K562 (cell line): ENCODE measurements at regions of chr19 and their contacts with region 1.

Region 1: DNA sequence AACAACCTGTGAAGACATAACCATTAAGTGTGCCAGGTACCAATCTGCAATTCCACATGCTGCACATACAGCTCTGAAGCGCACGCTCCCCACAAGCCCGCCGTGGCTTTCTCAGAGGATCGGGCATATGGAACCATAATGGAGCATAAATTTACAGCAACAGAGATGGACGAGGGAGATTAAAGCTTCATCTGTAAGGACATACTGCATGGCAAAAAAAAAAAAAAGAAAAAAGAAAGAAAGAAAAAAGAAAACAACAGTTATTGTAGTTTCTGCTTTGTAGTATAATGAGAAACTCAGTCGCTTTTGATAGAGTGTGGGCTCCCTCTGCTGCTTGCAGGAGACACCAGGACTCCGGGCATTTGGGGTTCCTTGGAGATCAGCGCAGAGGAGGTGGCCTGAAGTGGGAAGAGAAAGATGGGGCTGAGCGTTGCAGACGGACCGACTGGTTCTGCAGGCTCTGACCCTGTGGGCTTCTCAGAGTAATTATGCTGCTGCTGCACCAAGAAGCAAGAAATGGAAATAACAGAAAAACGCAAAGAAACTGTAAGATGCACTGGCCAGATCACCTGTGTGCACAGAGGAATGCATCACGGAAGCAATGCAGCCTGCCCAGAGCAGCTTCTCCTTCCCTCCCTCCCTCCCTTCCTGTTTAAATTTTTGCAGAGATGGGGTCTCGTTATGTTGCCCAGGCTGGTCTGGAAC is 10.8 kb upstream of the PDCD5 start:
- DNase-seq: peak; percentile 34 to 75 (median 41)
- ATAC-seq: peak; percentile 98
- H3K4me3 ChIP-seq: no peak overlapping the region
- H3K27ac ChIP-seq: no peak overlapping the region
- H3K4me1 ChIP-seq: no peaks in the 10 kb centered on the region; a peak in 1 of 5 replicates
- H3K27me3 ChIP-seq: peaks cover 24 to 28% of the 10 kb centered on the region in 2 experiments
- CTCF ChIP-seq: peak; percentile 79 to 94 (median 85)
- EP300 ChIP-seq: no peak
- POLR2A ChIP-seq: no peak
- RAD21 ChIP-seq: peak; percentile 89 to 95

Region 2: DNA sequence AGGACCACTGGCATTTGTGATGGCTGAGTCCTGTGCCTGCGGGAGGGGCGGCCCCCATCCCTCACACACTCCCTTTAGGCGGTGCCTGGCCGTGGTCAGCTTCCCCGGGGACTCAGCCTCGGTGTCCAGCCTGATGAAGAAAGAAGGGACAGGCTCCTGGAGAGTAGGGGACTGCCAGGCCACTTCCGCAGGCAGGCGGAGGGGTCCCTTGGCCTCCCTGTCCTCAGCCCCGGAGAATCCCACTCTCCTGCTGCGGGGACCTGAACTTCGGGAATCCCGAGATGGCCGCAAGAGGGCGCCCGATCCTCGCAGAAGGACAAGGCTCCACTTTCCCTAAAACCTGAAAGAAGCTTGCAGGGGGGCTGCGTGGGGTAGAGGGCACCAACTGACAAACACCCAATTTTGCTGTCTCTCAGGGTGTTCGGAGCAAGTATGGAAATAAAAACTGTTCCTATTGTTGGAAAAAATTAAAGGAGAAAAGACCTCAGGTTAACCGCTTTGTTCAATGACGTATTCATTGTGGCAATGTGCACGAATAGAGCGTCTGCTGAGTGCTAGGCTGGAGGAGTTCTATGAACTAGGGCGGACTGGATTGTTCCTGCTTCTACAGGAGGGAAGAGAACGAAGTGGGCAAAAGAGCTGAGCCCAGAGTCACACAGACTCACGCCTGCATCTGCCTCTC is 1900.8 kb before region 1 on chr19:
- CTCF ChIA-PET with region 1: no interaction called
- POLR2A ChIA-PET with region 1: no interaction called
- in situ Hi-C with region 1: loop called (anchors 10 kb)
- intact Hi-C with region 1: no loop called
- DNase-seq: peak; percentile 47 to 64 (median 59)
- ATAC-seq: peak; percentile 88
- H3K4me3 ChIP-seq: no peak overlapping the region
- H3K27ac ChIP-seq: no peak overlapping the region
- H3K4me1 ChIP-seq: peaks cover 0 to 5% of the 10 kb centered on the region in 2 experiments; a peak in 2 of 5 replicates
- H3K27me3 ChIP-seq: peaks cover 3 to 31% of the 10 kb centered on the region in 2 experiments; a peak in 2 of 5 replicates
- CTCF ChIP-seq: peak; percentile 69 to 79 (median 74)
- EP300 ChIP-seq: no peak
- POLR2A ChIP-seq: no peak
- RAD21 ChIP-seq: peak; percentile 29 to 66; a peak in 3 of 4 replicates

Region 3: GRCh38 chr19:32287811-32288227 is 282.4 kb before region 1 on chr19:
- CTCF ChIA-PET with region 1: interaction called, 24 read pairs
- POLR2A ChIA-PET with region 1: no interaction called
- in situ Hi-C with region 1: loop called (anchors 5 kb)
- intact Hi-C with region 1: loop called (anchors 1 kb)
- DNase-seq: peak; percentile 21 to 78 (median 36)
- ATAC-seq: peak; percentile 96
- H3K4me3 ChIP-seq: no peak overlapping the region
- H3K27ac ChIP-seq: no peak overlapping the region
- H3K4me1 ChIP-seq: no peaks in the 10 kb centered on the region
- H3K27me3 ChIP-seq: peaks cover 4 to 38% of the 10 kb centered on the region in 2 experiments; a peak in 3 of 5 replicates
- CTCF ChIP-seq: peak; percentile 71 to 82 (median 78)
- EP300 ChIP-seq: no peak
- POLR2A ChIP-seq: no peak
- RAD21 ChIP-seq: peak; percentile 70 to 81

Region 4: DNA sequence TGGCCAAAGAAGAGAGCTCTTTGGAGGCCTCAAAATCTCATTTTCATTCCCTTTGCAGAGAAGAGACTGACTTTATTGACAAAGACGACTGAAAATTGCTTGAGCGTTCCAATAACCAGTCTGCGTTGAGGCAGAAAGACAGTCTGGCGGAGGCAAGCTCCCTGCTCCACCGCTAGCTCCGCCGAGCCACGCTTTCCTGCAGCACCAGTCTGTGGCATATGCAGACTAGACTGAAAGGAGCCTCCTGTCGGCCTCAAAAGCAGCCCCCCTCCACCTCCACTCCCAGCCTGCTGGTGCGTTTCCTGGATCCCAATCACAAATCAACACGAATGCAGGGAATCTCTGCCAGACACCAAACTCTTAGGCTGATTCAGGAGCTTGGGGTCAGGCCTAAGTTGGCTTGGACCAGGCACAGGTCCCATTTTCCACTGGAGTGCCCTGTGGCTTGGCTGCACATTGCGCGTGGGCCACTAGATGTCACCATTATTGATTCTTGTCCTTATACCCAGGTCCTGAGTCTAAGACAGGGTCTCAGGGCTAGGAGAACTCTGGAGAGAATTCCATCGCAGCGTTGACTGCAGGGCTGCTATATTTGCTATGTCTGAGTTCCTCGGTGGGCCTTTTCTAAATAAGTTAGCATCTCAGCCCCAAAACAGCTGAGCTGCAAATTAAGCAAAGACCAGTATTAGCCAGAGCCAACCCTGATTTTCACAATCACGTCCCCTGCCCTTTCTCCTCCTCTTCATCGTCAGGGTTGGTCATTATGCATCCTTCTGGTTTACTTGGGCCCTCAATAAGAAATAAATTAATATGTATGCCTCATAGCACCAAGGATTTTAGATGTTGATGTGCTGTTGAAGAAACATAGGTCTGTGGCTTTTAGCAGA is 230.0 kb before region 1 on chr19:
- CTCF ChIA-PET with region 1: interaction called, 10 read pairs
- POLR2A ChIA-PET with region 1: interaction called, 4 read pairs
- in situ Hi-C with region 1: no loop called
- intact Hi-C with region 1: loop called (anchors 1 kb)
- DNase-seq: peak; percentile 44 to 65 (median 55)
- ATAC-seq: peak; percentile 93
- H3K4me3 ChIP-seq: no peak overlapping the region
- H3K27ac ChIP-seq: no peak overlapping the region
- H3K4me1 ChIP-seq: peaks cover 0 to 5% of the 10 kb centered on the region in 2 experiments; a peak in 3 of 5 replicates
- H3K27me3 ChIP-seq: peaks cover 0 to 2% of the 10 kb centered on the region in 2 experiments; a peak in 1 of 5 replicates
- CTCF ChIP-seq: peak; percentile 64 to 84 (median 72)
- EP300 ChIP-seq: no peak
- POLR2A ChIP-seq: no peak
- RAD21 ChIP-seq: peak; percentile 36 to 70

Region 5: GRCh38 chr19:32464279-32464678 is 106.0 kb before region 1 on chr19:
- CTCF ChIA-PET with region 1: interaction called, 3 read pairs
- POLR2A ChIA-PET with region 1: no interaction called
- in situ Hi-C with region 1: no loop called
- intact Hi-C with region 1: loop called (anchors 10 kb)
- DNase-seq: no peak
- ATAC-seq: no peak
- H3K4me3 ChIP-seq: no peak overlapping the region
- H3K27ac ChIP-seq: no peak overlapping the region
- H3K4me1 ChIP-seq: no peaks in the 10 kb centered on the region
- H3K27me3 ChIP-seq: no peaks in the 10 kb centered on the region
- CTCF ChIP-seq: peak in 1 of 3 experiments; percentile 51; a peak in 2 of 6 replicates
- EP300 ChIP-seq: no peak
- POLR2A ChIP-seq: no peak
- RAD21 ChIP-seq: no peak; a peak in 1 of 4 replicates

Region 6: GRCh38 chr19:32627714-32628270 is 57.6 kb after region 1 on chr19:
- CTCF ChIA-PET with region 1: no interaction called
- POLR2A ChIA-PET with region 1: no interaction called
- in situ Hi-C with region 1: no loop called
- intact Hi-C with region 1: no loop called
- DNase-seq: peak in 2 of 4 experiments; percentile 9 to 27
- ATAC-seq: peak; percentile 42
- H3K4me3 ChIP-seq: no peak overlapping the region
- H3K27ac ChIP-seq: peak overlapping the region; percentile 75
- H3K4me1 ChIP-seq: peaks cover 17 to 41% of the 10 kb centered on the region in 2 experiments; a peak in 4 of 5 replicates
- H3K27me3 ChIP-seq: no peaks in the 10 kb centered on the region
- CTCF ChIP-seq: peak in 1 of 3 experiments; percentile 50; a peak in 2 of 6 replicates
- EP300 ChIP-seq: no peak
- POLR2A ChIP-seq: no peak
- RAD21 ChIP-seq: no peak